Naive thymus-derived CD4-positive, alpha-beta T cell (primary cell): ENCODE measurements at regions of chr1 and their contacts with region 1.

Region 1: GRCh38 chr1:173476664-173477285 is 360 bp upstream of the PRDX6 start:
- DNase-seq: peak; percentile 65 to 82 (median 78)
- ATAC-seq: peak; percentile 87
- H3K4me3 ChIP-seq: peak overlapping the region; percentile 92
- H3K4me3 Mint-ChIP-seq: peak overlapping the region; percentile 82 to 94 (median 91)
- H3K27ac ChIP-seq: peak overlapping the region; percentile 78
- H3K27ac Mint-ChIP-seq: peak overlapping the region; percentile 61 to 96 (median 89)
- H3K4me1 ChIP-seq: peaks cover 20 to 31% of the 10 kb centered on the region in 2 donors
- H3K4me1 Mint-ChIP-seq: peaks cover 38 to 72% (median 63%) of the 10 kb centered on the region in 7 donors
- H3K27me3 ChIP-seq: no peaks in the 10 kb centered on the region
- H3K27me3 Mint-ChIP-seq: no peaks in the 10 kb centered on the region

Region 2: GRCh38 chr1:173400387-173400995 is 76.3 kb before region 1 on chr1:
- CTCF ChIA-PET with region 1: no interaction called
- POLR2A ChIA-PET with region 1: no interaction called
- intact Hi-C with region 1: no loop called
- DNase-seq: no peak
- ATAC-seq: no peak
- H3K4me3 ChIP-seq: no peak overlapping the region
- H3K4me3 Mint-ChIP-seq: no peak overlapping the region
- H3K27ac ChIP-seq: no peak overlapping the region
- H3K27ac Mint-ChIP-seq: no peak overlapping the region
- H3K4me1 ChIP-seq: no peaks in the 10 kb centered on the region
- H3K4me1 Mint-ChIP-seq: no peaks in the 10 kb centered on the region
- H3K27me3 ChIP-seq: no peaks in the 10 kb centered on the region
- H3K27me3 Mint-ChIP-seq: no peaks in the 10 kb centered on the region

Region 3: GRCh38 chr1:173444757-173445156 is 32.0 kb before region 1 on chr1:
- CTCF ChIA-PET with region 1: no interaction called
- POLR2A ChIA-PET with region 1: interaction called, 3 read pairs
- intact Hi-C with region 1: loop called in 1 of 2 experiments (anchors 1 kb)
- DNase-seq: peak in 7 of 9 donors; percentile 26 to 72 (median 57)
- ATAC-seq: peak; percentile 74
- H3K4me3 ChIP-seq: no peak overlapping the region
- H3K4me3 Mint-ChIP-seq: peak overlapping the region in 9 of 10 donors; percentile 18 to 78 (median 53)
- H3K27ac ChIP-seq: no peak overlapping the region
- H3K27ac Mint-ChIP-seq: peak overlapping the region; percentile 4 to 80 (median 29)
- H3K4me1 ChIP-seq: peaks cover 4 to 14% of the 10 kb centered on the region in 2 donors
- H3K4me1 Mint-ChIP-seq: peaks cover 13 to 36% (median 26%) of the 10 kb centered on the region in 7 donors
- H3K27me3 ChIP-seq: no peaks in the 10 kb centered on the region
- H3K27me3 Mint-ChIP-seq: no peaks in the 10 kb centered on the region